Posterior cingulate gyrus (tissue), 11 donors: ENCODE measurements at regions of chr3 and their contacts with region 1.

Region 1: DNA sequence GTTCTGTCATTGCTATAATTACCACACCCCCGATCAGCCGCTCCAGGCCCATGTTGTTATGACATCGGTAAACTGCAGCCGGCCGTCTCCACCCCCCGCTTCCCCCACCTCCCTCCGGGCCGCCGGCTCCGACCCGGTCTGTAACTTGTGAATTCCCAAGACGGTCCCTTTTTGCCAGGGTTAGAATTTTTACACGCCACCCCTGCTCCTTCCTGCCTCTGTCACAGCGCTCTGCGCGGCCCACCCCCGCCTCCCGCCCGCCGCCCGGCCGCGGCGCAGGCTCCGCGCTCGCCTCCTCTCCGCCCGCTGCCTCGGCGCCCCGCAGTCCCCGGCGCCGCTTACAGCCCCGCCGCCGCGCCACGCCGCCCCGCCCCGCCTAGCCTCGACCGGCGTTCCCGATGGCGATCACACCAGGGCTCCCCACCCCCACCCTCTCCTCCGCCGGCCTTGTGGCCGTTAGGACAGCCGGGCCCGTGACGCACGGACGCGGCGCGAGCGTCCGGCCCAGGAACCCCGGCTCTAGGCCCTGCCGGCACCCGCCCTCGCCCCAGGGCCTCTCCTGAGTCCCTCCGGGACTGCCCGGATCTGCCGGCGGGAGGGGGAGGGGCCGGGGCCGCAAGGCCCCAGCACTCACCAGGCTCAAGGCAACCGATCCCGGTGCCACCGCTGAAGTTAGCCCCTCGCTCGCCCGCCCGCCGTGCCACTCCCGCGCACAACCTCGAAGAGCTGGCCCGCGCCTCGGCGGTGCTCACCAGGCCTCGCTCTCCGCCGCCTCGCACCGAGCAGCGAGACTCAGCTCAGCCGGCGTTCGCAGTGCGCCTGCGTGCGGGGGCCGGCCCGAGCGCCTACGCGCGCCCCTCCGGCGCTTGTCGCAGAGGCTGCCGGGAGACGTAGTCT is at the start of gene KPNA1:
- DNase-seq: peak; percentile 81 to 98 (median 86)

Region 2: DNA sequence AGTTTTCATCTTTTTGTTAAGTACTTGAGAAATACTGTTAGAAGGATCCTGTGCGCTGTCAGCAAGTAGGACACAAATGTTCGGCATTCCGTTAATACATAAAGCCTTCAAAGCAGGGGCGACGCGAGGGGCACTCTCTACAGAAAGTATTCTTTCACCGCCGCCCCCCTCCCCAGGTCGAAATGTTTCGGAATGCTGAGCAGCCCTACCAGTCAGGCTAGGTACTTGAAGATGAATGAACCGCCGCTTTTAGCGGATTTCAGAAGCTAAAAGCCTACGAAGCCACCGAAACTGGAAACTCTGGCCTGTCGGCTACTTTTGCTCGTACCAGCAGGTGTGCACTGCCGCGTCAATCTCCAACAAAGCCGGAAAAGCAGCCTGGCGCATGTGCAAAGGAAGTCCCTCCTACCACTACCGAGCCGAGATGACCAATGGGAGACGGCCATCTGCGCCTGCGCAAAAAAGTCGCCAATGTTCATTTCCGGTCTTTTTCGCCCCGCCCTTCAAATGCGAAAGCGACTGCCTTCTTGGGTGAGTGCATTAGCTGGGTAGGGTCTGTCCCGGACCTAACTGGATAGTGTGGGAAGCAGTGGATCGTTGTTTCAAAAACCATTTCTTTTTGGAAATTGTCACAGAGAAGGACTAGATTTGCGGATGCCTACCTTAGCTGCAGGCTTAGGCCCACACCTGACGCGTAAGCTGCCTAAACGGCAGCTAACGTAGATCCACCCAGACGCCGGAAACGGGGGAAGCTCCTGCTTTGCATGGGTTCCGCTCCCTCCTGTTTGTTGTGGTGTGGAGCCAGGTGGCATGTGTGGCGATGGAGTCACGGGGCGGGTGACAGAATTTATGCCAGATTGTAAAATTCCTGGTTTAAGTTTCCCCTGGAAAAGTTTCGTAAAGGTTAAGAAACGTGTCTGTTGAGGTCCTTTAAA is 98.4 kb before region 1 on chr3 and contains the start of gene WDR5B:
- intact Hi-C with region 1: loop called (anchors 5 kb)
- DNase-seq: peak; percentile 95 to 99 (median 98)